ENCODE measurements at regions of chr6 and their contacts with region 1.

Region 1: GRCh38 chr6:53151676-53152075 is 3.0 kb upstream of the GCM1 start:
- DNase-seq: no peak
- H3K27ac ChIP-seq: no peak overlapping the region
- CTCF ChIP-seq: no peak

Region 2: GRCh38 chr6:52640170-52640569 is 511.5 kb before region 1 on chr6:
- CTCF ChIA-PET with region 1: no interaction called
- POLR2A ChIA-PET with region 1: no interaction called
- DNase-seq: no peak
- H3K27ac ChIP-seq: no peak overlapping the region
- CTCF ChIP-seq: no peak

Region 3: GRCh38 chr6:52995913-52996645 is 155.6 kb before region 1 on chr6:
- CTCF ChIA-PET with region 1: interaction called, 11 read pairs
- POLR2A ChIA-PET with region 1: no interaction called
- DNase-seq: no peak
- H3K27ac ChIP-seq: peak overlapping the region; percentile 96
- CTCF ChIP-seq: no peak

Region 4: GRCh38 chr6:53074347-53074746 is 77.3 kb before region 1 on chr6:
- CTCF ChIA-PET with region 1: no interaction called
- POLR2A ChIA-PET with region 1: no interaction called
- DNase-seq: no peak
- H3K27ac ChIP-seq: no peak overlapping the region
- CTCF ChIP-seq: no peak